ENCODE measurements at regions of chr19 and their contacts with region 1.

Region 1: DNA sequence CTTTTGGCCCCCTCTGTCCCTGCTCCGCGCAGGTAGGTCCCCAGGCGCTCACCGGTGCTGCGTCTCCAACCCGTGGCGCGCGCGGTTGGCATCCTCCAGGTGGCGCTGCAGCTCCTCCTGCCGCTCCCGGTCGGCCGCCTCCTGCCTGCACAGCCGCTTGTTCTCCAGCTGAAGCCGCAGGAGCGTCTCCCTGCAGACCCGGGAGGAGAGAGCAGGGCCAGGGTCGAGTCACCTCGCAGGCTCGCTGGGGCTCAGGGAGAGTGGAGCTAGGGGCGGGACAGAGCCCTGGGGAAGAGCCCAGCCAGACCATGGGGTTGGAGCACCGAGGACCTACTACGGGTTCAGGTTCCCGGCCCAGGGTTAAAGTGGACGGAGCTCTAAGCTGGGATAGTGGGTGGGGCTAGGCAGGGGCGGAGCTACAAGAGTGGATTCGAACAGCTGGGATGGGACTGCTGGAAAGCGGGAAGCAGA is 9.3 kb downstream of the HOOK2 start:
- DNase-seq: no peak
- H3K4me3 ChIP-seq: peak overlapping the region; percentile 42 to 46
- H3K27ac ChIP-seq: peak overlapping the region; percentile 82
- H3K4me1 ChIP-seq: peaks cover 11% of the 10 kb centered on the region
- H3K27me3 ChIP-seq: no peaks in the 10 kb centered on the region
- CTCF ChIP-seq: peak; percentile 89 to 96 (median 94)
- POLR2A ChIP-seq: no peak

Region 2: GRCh38 chr19:12801466-12802266 is 35.6 kb after region 1 on chr19 and contains the starts of genes PRDX2 and THSD8:
- intact Hi-C with region 1: loop called (anchors 5 kb)
- DNase-seq: no peak
- H3K4me3 ChIP-seq: peak within 1 kb of the TSS; percentile 70 to 93
- H3K27ac ChIP-seq: peak within 1 kb of the TSS; percentile 78
- H3K4me1 ChIP-seq: peaks cover 31% of the 10 kb centered on the region
- H3K27me3 ChIP-seq: no peaks in the 10 kb centered on the region
- CTCF ChIP-seq: no peak
- POLR2A ChIP-seq: peak in 1 of 2 donors; percentile 59
- total RNA-seq, gene PRDX2: 190 TPM
- total RNA-seq, gene THSD8: not detected

Region 3: DNA sequence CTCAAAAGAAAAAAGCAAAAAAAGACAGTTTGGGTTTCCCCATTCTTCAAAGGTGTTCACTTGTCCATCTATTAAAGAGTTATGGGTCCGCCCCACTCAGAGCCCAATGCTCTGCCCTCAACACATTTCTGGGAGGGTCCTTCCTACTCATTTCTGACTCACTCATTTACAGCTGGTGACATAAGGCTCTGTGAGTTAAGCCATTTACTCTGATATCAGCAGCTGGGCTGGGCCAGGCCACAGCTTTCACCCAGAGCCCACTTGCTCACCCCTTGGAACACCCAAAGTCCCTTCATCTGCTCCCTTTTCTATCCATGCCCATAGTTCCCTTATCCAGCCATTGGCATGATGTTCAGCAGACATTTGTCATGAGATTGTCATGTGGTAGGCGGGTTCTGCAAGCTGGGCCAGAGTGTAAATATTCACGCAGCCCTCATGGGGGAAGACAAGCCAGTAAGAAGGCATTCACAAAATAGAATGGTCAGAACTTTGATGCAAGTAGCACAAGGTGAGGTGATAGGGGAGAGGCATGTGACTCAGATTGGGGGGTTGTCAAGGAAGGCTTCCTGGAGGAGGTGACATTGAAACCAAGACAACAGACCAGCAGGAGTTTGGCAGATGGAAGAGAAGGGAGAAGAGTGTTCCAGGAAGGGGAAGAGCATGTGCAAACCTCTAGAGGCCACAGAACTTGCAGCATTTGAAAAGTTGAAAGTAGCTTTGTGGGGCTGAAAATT is 78.1 kb after region 1 on chr19:
- intact Hi-C with region 1: loop called (anchors 2 kb)
- DNase-seq: no peak
- H3K4me3 ChIP-seq: no peak overlapping the region
- H3K27ac ChIP-seq: no peak overlapping the region
- H3K4me1 ChIP-seq: peaks cover 13% of the 10 kb centered on the region
- H3K27me3 ChIP-seq: peaks cover 18% of the 10 kb centered on the region
- CTCF ChIP-seq: no peak
- POLR2A ChIP-seq: no peak

Region 4: GRCh38 chr19:12974301-12975220 is 208.5 kb after region 1 on chr19:
- intact Hi-C with region 1: no loop called
- DNase-seq: no peak
- H3K4me3 ChIP-seq: no peak overlapping the region
- H3K27ac ChIP-seq: no peak overlapping the region
- H3K4me1 ChIP-seq: peaks cover 2% of the 10 kb centered on the region
- H3K27me3 ChIP-seq: no peaks in the 10 kb centered on the region
- CTCF ChIP-seq: no peak
- POLR2A ChIP-seq: no peak

Region 5: DNA sequence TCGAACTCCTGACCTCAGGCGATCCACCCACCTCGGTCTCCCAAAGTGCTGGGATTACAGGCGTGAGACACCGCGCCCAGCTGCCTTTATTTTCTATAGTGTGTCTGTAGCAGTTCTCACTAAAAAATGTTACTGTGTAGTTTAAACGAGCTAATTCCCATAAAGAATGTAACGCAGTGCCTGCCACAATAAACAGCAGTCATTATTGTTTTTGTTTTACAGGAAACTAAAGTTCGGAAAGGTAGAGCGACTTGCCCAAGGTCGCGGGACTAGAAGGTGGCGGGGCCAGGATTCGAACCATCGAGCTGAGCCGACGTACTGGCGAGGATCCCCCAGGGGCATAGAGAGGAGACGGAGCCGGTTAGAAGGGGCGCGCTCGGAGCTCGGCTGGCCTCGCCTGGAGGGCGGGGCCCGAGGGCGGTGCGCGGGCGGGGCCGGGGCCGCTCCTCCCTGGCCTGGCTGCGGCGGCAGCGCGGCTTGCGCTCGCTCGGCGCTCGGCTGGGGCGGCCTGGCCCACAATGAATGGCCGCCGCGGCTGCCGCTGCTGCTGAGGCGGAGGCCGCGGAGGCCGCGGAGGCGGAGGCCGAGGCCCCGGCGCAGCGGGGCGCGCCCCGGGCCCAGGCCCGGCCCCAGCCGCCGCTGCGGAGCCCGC is 351.8 kb after region 1 on chr19 and contains the start of gene NACC1:
- intact Hi-C with region 1: no loop called
- DNase-seq: no peak
- H3K4me3 ChIP-seq: peak within 1 kb of the TSS; percentile 92 to 99
- H3K27ac ChIP-seq: peak within 1 kb of the TSS; percentile 78
- H3K4me1 ChIP-seq: peaks cover 58% of the 10 kb centered on the region
- H3K27me3 ChIP-seq: no peaks in the 10 kb centered on the region
- CTCF ChIP-seq: no peak
- POLR2A ChIP-seq: no peak
- total RNA-seq, gene NACC1: 22.6 TPM

Measured in vagina (tissue), 2 donors.